Heart right ventricle (tissue), 16 donors: ENCODE measurements at regions of chr10 and their contacts with region 1.

Region 1: GRCh38 chr10:77926566-77927401 is at the start of gene DLG5:
- DNase-seq: peak; percentile 66 to 77
- ATAC-seq: peak; percentile 73 to 89 (median 82)
- H3K4me3 ChIP-seq: peak within 1 kb of the TSS; percentile 69 to 97 (median 74)
- H3K27ac ChIP-seq: peak within 1 kb of the TSS in 9 of 10 donors; percentile 34 to 79 (median 65)
- H3K4me1 ChIP-seq: peaks cover 10 to 34% (median 19%) of the 10 kb centered on the region in 9 donors
- H3K27me3 ChIP-seq: peaks cover 0 to 48% (median 0%) of the 10 kb centered on the region in 7 donors
- CTCF ChIP-seq: peak in 1 of 9 donors; percentile 22
- total RNA-seq, gene DLG5: 6.6 to 14.1 (median 11.7) TPM

Region 2: DNA sequence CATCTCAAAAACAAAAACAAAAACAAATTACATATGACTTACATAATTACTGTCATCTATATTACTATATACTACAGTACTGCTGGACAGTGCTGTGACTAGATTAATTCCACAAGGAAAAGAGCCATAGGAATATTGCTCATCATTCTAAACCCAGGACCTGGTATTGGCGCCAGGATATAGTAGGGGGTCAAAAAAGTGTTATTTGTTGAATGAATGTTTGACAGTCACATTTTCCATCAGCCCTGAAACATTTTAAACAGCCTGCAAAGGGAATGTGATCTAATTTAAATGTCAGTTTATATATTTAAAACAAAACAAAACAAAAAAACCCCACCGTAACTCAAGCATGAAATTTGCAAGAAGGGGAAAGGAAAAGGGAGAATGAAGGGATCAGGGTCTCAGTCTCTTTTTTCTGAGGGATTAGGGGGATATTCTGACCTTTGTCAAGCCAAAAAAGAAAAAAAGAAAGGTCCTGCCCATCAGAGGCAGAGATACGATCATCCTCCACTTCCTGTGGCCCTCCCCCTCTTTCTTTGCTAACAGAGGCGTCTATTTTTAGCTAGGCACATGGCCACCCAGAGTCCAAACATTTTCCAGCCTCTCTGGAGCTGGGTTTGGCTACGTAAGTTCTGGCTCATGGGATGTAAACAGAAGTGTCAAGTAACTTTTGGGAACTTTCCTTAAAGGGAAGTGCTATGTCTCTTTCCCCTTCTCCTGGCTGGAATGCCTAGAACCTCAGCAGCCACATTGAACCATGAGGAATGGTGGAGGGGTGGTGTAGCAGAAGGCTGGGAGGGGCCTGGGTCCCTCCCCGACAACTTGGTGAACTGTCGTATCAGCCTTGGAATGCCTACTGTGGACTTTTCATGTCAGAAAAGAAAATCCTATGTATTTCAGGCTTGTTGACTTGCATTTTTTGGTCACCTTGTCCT is 44.4 kb after region 1 on chr10:
- intact Hi-C with region 1: loop called in 3 of 10 experiments (anchors 5 kb)
- DNase-seq: peak; percentile 24 to 86
- ATAC-seq: peak; percentile 82 to 96 (median 93)
- H3K4me3 ChIP-seq: peak overlapping the region in 1 of 10 donors; percentile 25
- H3K27ac ChIP-seq: peak overlapping the region; percentile 16 to 84 (median 68)
- H3K4me1 ChIP-seq: peaks cover 0 to 28% (median 12%) of the 10 kb centered on the region in 9 donors
- H3K27me3 ChIP-seq: no peaks in the 10 kb centered on the region
- CTCF ChIP-seq: no peak